Activated CD8-positive, alpha-beta T cell treated with anti-CD3 and anti-CD28 coated beads, Interleukin-2, amount 10 ng/mL, durations not matched to agents 7 days and 5 days (primary cell): ENCODE measurements at regions of chr5 and their contacts with region 1.

Region 1: GRCh38 chr5:43556857-43557542 is at the start of gene PAIP1:
- DNase-seq: peak; percentile 84
- ATAC-seq: peak; percentile 92
- H3K4me3 Mint-ChIP-seq: peak within 1 kb of the TSS; percentile 92
- H3K27ac Mint-ChIP-seq: peak within 1 kb of the TSS; percentile 94
- H3K4me1 Mint-ChIP-seq: peaks cover 13% of the 10 kb centered on the region
- H3K27me3 Mint-ChIP-seq: peaks cover 16% of the 10 kb centered on the region
- total RNA-seq, gene PAIP1: 31.8 to 36.3 TPM

Region 2: GRCh38 chr5:43497311-43498104 is 59.5 kb before region 1 on chr5:
- CTCF ChIA-PET with region 1: no interaction called
- POLR2A ChIA-PET with region 1: no interaction called
- DNase-seq: no peak
- ATAC-seq: no peak
- H3K4me3 Mint-ChIP-seq: no peak overlapping the region
- H3K27ac Mint-ChIP-seq: no peak overlapping the region
- H3K4me1 Mint-ChIP-seq: no peaks in the 10 kb centered on the region
- H3K27me3 Mint-ChIP-seq: no peaks in the 10 kb centered on the region

Region 3: DNA sequence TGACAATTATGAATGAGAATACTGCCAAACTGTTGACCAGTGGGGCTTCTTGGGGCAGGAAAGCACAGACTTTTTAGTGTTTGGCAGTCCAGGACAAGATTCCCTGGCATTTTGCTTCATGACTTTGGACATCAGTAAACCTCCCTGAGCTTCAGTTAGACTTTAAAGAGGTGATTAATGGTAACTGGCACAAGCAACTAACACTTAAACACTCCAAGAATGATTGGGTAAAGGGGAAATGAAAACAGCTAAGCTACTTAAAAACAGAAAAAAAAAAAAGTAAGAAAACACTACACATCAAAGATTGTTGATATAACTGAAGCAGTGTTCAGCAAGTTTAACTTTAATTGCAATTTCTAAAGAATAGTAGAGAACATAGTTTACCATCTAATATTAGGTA is 13.6 kb before region 1 on chr5:
- CTCF ChIA-PET with region 1: interaction called, 22 read pairs
- POLR2A ChIA-PET with region 1: interaction called, 5 read pairs
- DNase-seq: no peak
- ATAC-seq: no peak
- H3K4me3 Mint-ChIP-seq: no peak overlapping the region
- H3K27ac Mint-ChIP-seq: peak overlapping the region; percentile 18
- H3K4me1 Mint-ChIP-seq: peaks cover 5% of the 10 kb centered on the region
- H3K27me3 Mint-ChIP-seq: no peaks in the 10 kb centered on the region

Region 4: DNA sequence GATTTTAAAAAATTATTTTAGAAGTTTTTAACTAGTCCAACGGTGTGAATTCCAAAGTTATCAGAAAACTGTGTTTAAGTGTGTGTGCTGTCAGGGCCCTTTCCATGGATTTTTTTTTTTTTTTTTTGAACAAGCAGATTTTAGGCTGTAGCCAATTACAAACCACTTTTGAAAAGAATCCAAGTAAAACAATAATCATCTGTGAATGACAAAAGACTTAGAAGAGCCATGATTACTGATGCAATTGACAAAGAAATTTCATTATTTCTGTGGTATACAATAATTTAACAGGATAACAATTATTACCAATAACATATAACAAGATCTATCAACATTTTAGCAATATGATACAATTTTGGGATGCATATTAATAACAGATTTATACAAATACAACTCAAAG is 16.1 kb after region 1 on chr5:
- CTCF ChIA-PET with region 1: no interaction called
- POLR2A ChIA-PET with region 1: no interaction called
- DNase-seq: no peak
- ATAC-seq: no peak
- H3K4me3 Mint-ChIP-seq: no peak overlapping the region
- H3K27ac Mint-ChIP-seq: no peak overlapping the region
- H3K4me1 Mint-ChIP-seq: no peaks in the 10 kb centered on the region
- H3K27me3 Mint-ChIP-seq: no peaks in the 10 kb centered on the region

Region 5: GRCh38 chr5:43602461-43603343 is 45.7 kb after region 1 on chr5 and contains the start of gene NNT:
- CTCF ChIA-PET with region 1: interaction called, 3 read pairs
- POLR2A ChIA-PET with region 1: interaction called, 15 read pairs
- DNase-seq: peak; percentile 84
- ATAC-seq: peak; percentile 92
- H3K4me3 Mint-ChIP-seq: peak within 1 kb of the TSS; percentile 92
- H3K27ac Mint-ChIP-seq: peak within 1 kb of the TSS; percentile 90
- H3K4me1 Mint-ChIP-seq: peaks cover 51% of the 10 kb centered on the region
- H3K27me3 Mint-ChIP-seq: no peaks in the 10 kb centered on the region
- total RNA-seq, gene NNT: 103 to 104 TPM